Right lobe of liver (tissue), 6 donors: ENCODE measurements at regions of chr5 and their contacts with region 1.

Region 1: GRCh38 chr5:122774861-122775549 is at the start of gene SNX2:
- DNase-seq: peak; percentile 97 to 98 (median 97)
- ATAC-seq: peak; percentile 95 to 99 (median 96)
- H3K4me3 ChIP-seq: peak within 1 kb of the TSS; percentile 71 to 81 (median 78)
- H3K27ac ChIP-seq: peak within 1 kb of the TSS; percentile 84 to 92 (median 85)
- H3K4me1 ChIP-seq: peaks cover 0 to 21% (median 0%) of the 10 kb centered on the region in 4 donors
- H3K27me3 ChIP-seq: no peaks in the 10 kb centered on the region
- CTCF ChIP-seq: peak in 1 of 4 donors; percentile 29
- POLR2A ChIP-seq: peak; percentile 74
- total RNA-seq, gene SNX2: 26.7 to 42.0 (median 34.2) TPM

Region 2: DNA sequence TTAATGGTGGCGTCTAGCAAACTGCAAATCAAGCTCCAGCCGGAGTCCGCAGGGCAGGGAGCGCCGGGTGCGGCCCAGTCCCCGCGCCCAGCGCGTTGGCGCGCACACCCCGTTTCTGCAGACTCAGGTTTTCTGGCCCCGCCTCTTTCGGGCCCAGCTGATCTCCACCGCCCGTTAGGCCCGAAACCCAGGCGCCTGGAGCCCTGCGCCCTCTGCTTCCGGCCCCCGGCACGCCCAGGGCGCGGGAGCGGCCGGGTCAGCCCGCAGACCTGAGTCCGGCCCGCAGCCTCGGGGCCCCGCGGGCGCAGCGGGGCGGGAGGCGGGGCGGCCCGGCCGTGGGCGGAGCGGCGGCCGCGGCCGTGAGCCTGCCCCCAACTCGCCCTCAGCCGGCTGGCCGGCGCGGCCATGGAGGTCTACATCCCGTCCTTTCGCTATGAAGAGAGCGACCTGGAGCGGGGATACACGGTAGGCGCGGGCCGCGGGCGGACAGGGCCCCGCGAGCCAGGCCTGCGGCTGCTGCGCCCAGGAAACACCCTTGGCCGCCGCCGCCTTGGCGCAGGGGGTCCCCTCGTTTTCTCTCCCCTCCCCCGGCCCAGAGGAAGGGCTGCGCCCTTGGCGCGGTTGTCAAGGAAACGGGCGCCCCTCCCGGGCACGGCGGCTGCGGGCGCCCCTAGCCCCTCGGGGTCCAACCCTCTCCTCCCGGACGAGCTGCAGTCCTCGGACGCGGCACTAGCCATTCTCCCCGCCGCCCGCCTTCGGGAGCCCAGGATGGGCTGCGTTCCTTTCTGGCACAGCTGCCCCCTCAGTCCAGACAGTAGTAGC is 70.4 kb after region 1 on chr5 and contains the start of gene SNX24:
- intact Hi-C with region 1: loop called in 1 of 2 experiments (anchors 10 kb)
- DNase-seq: peak; percentile 89 to 93 (median 92)
- ATAC-seq: peak; percentile 87 to 96 (median 92)
- H3K4me3 ChIP-seq: peak within 1 kb of the TSS; percentile 90 to 95 (median 95)
- H3K27ac ChIP-seq: peak within 1 kb of the TSS; percentile 58 to 75 (median 63)
- H3K4me1 ChIP-seq: peaks cover 0 to 11% (median 3%) of the 10 kb centered on the region in 4 donors
- H3K27me3 ChIP-seq: no peaks in the 10 kb centered on the region
- CTCF ChIP-seq: no peak
- POLR2A ChIP-seq: peak; percentile 77
- total RNA-seq, gene SNX24: 6.2 to 23.7 (median 12.5) TPM